ENCODE measurements at regions of chr1 and their contacts with region 1.

Region 1: GRCh38 chr1:27992276-27992675 is 32.5 kb downstream of the XKR8 start:
- DNase-seq: peak; percentile 30 to 66 (median 47)
- H3K4me3 ChIP-seq: peak overlapping the region in 1 of 7 experiments; percentile 12
- H3K27ac ChIP-seq: peak overlapping the region in 1 of 2 experiments; percentile 73
- H3K4me1 ChIP-seq: peaks cover 8 to 29% (median 18%) of the 10 kb centered on the region in 4 experiments
- H3K27me3 ChIP-seq: no peaks in the 10 kb centered on the region

Region 2: GRCh38 chr1:28045777-28046176 is 53.5 kb after region 1 on chr1:
- CTCF ChIA-PET with region 1: no interaction called
- POLR2A ChIA-PET with region 1: interaction called, 11 read pairs
- DNase-seq: no peak
- H3K4me3 ChIP-seq: no peak overlapping the region
- H3K27ac ChIP-seq: no peak overlapping the region
- H3K4me1 ChIP-seq: peaks cover 0 to 3% (median 0%) of the 10 kb centered on the region in 4 experiments
- H3K27me3 ChIP-seq: no peaks in the 10 kb centered on the region